HEK293T (cell line): ENCODE measurements at regions of chr15 and their contacts with region 1.

Region 1: DNA sequence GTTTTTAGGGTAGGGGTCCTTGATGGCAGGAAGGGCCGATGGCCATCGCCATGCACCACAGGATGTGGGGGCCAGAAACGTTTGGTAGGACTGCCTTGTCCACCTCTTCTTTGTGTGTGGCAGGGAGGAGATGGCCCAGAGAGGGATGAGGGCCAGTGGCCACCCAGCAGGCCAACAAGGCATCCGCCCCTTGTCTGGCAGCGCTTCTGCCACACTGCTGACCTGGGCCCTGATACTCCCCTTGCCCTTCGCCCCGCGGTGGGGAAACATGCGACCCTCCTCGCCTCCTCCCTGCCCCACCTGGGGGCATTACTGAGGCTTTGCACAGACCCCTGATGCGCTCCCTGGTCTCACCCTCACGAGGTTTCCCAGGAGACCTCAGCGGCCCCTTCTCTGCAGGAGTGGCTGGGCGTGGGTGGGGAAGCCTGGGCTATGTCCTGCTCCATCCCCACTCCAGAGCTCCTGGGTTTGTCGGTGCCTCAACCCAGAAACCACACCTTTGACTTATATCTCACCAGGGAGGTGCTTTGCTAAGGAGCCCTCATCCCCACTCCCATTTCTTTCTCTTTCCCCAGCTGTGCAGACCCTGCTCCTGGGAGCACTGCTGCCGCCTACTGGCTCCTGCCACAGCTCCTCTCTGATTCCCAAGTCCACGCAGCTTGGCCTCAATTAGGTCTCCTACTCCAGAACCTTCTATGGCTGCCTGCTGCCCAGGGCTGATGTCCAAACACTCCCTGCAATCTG is 38.7 kb downstream of the FEM1B start:
- DNase-seq: peak; percentile 56

Region 2: DNA sequence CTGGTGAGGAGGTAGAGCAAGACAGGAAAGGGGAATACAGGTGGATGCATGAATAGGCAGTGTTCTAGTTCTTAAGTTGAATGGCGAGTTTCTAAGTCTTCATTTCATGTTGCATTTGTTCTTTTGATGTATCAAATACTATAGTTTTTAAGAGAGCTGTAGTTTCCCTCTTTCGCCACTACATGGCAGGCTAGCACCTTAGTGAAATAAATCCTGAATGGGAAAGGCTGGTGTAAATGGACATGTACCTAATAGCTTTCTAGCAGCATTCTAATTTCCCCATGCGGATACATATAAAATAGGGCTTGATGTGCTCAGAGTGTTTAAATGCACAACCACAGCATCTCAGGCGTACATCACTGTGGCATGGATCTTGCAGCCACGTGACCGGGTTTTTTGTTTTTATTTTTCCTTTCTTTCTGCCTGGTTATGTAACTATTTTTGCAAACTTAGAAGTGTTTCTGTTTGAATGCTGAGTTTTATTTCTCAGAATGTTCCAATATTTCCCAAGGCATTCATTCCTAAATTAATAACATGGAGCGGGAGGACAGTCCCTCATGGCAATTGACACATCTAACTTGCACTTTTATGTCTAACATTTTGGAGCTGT is 63.2 kb before region 1 on chr15:
- CTCF ChIA-PET with region 1: interaction called, 13 read pairs
- POLR2A ChIA-PET with region 1: no interaction called
- DNase-seq: peak; percentile 62

Region 3: DNA sequence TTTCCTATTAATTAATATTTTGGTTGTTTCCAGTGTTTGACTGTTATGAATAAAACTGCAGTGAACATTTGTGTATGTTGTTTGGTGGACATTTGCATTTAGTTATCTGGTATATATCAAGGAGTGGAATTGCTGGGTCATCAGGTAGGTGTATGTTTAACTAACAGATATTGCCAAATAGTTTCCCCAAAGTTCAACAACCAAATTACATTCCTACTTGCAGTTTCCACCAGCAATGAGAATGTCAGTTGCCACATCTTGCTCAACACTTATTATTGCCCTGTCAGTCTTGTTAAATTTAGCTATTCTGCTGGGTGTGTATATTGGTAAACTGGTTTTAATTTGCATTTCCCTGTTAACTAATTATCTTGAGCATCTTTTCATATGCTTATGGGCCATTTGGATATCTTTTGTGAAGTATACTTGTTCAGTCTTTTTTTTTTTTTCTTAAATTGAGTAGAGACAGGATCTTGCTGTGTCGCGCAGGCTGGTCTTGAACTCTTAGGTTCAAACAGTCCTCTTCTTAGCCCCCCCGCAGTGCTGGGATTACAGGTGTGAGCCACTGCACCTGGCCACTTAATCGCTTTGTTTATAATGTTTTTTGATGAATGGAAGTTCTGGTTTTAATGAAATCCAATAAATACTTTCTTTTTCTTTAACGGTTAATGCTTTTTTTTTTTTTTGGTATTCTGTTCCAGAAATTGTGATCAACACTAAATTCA is 30.8 kb before region 1 on chr15:
- CTCF ChIA-PET with region 1: no interaction called
- POLR2A ChIA-PET with region 1: no interaction called
- DNase-seq: no peak

Region 4: GRCh38 chr15:68304589-68305337 is 11.5 kb before region 1 on chr15:
- CTCF ChIA-PET with region 1: interaction called, 18 read pairs
- POLR2A ChIA-PET with region 1: interaction called, 3 read pairs
- DNase-seq: no peak